ENCODE measurements at regions of chr3 and their contacts with region 1.

Region 1: GRCh38 chr3:121883507-121883906 is 10.7 kb upstream of the SLC15A2 start:
- DNase-seq: peak in 1 of 2 experiments; percentile 52
- H3K4me3 ChIP-seq: no peak overlapping the region
- H3K27ac ChIP-seq: no peak overlapping the region
- H3K4me1 ChIP-seq: no peaks in the 10 kb centered on the region
- H3K27me3 ChIP-seq: no peaks in the 10 kb centered on the region
- CTCF ChIP-seq: peak; percentile 72

Region 2: DNA sequence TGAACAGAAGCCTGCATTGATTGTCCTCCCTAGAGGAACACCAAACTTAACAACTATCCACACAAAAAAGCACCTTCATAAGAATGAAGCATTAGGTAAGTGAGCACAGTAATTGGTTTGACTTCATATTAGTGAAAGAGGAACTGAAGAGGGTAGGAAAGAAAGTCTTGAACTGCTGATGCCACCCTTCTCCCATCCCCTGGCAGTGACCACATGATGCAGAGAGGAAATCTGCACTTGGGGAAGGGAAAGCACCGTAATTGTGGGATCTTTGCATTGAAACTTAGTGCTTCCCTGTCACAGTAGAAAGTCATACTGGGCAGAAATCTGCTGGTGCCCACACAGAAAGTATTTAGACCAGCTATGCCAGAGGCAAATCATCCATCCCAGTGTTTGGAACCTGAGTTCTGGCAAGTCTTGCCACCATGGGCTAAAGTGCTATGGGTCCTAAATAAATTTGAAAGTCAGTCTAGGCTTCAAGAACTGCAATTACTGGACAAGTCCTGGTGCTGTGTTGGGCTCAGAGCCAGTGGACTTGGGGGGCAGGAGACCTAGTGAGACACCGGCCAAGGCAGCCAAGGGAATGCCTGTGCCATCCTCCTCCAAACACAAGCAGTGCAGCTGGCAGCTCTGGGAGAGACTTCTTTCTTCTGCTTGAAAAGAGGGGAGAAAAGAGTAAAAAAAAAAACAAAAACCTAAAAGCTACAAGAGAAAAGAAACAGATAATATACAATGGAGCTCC is 74.3 kb after region 1 on chr3:
- CTCF ChIA-PET with region 1: no interaction called
- POLR2A ChIA-PET with region 1: no interaction called
- intact Hi-C with region 1: no loop called
- DNase-seq: no peak
- H3K4me3 ChIP-seq: no peak overlapping the region
- H3K27ac ChIP-seq: no peak overlapping the region
- H3K4me1 ChIP-seq: no peaks in the 10 kb centered on the region
- H3K27me3 ChIP-seq: no peaks in the 10 kb centered on the region
- CTCF ChIP-seq: no peak

Region 3: DNA sequence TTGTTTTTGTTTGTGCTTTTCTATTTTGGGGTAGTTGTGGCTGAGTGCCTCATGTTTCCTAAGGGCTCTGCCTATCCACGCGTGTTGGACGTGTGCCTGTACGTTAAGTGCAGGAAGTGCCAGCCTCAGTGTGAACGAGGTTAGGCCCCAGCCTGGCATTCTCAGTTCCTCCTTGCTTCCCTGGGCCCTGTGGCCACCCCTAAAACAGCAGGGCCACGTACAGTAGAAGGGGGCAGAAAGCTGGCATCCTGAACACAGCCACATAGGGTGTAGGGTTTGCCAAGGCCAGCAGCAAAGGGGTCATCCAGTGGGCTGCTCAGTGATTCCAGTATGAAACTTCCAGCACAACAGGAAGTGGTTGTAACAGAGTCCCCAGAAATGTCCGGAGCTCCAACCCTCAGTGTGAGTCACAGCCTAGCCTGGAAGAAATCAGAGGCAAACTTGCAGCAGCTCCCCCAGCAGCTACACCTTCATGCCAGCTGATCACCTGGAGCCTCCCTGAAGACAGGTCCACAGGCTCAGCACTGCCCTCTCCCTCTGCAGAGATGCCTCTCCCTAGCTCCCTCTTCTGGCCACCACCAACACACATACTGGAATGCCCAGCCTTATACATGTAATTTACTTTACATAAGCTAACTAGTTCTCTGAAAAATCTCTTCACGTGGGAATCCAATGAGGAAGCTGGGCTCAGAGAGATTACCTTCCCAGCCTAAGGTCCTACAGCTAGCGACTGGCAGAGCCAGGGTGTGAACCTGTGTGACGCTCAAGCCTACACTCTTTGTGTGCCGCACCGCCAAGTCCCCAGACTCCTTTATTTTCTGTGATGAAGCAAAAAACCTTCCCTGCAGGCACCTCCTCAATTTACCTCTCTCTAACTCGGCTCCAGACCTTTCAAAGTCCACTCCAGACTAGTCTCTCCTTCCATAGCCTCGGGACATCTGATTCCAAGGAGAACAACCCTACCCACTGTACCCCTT is 111.9 kb after region 1 on chr3:
- CTCF ChIA-PET with region 1: interaction called, 11 read pairs
- POLR2A ChIA-PET with region 1: no interaction called
- intact Hi-C with region 1: loop called (anchors 1 kb)
- DNase-seq: peak; percentile 74 to 84
- H3K4me3 ChIP-seq: no peak overlapping the region
- H3K27ac ChIP-seq: peak overlapping the region; percentile 56
- H3K4me1 ChIP-seq: peaks cover 12% of the 10 kb centered on the region; the same call in 1 of the 2 replicates
- H3K27me3 ChIP-seq: no peaks in the 10 kb centered on the region
- CTCF ChIP-seq: peak; percentile 69